Endothelial cell of umbilical vein (primary cell): ENCODE measurements at regions of chr3 and their contacts with region 1.

Region 1: DNA sequence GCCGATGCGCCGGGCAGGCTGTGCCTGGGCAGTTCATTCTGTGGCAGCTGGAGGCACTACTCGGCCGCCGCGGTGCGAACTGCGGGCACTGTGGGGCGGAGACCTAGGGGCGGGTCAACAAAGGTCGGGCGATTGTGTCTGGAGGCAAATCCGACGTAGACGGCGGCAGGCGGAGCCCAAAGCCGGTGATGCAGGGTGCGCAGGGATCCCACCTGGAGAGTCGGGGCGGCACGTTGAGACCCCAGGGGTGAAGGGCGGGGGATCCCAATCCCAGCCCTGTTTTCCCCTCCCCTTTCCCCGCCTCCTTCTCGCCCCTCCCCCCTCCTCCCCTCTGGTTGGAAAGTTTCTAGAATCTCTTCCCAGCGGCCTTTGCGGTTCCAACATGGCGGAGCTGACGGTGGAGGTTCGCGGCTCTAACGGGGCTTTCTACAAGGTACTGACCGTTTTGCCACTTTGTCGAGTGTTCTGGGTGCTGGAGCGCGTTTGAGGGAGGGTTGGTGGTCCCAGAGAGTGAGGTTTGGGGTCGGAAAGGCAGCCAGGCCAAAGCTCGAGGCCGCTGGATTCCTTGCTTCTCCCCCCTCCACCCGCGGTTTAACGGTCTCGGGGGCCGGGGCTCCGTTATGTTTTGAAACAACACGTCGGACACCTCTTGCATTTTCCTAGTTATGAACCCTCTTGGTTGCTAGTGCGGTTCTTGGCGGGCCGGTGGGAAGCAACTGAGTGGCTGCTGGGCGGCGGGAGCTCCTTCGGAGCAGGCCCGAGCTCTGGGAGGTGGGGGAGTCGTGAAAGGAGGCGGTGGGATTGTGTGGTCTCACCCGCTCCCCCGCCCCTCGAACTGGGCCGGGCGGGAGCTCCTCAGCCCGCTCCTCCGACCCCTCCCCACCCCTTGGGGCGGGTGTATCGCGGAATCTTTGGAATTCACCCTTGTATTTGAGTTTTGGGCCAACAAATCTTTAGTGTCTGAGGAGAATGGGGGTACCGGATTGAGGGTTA is at the start of gene FXR1:
- DNase-seq: peak; percentile 83
- H3K4me3 ChIP-seq: peak within 1 kb of the TSS; percentile 81 to 98 (median 90)
- H3K27ac ChIP-seq: peak within 1 kb of the TSS; percentile 92
- H3K4me1 ChIP-seq: peaks cover 16% of the 10 kb centered on the region
- H3K27me3 ChIP-seq: no peaks in the 10 kb centered on the region
- CTCF ChIP-seq: peak; percentile 67 to 83
- POLR2A ChIP-seq: peak; percentile 87
- total RNA-seq, gene FXR1: 183 and 186 TPM in 2 replicates

Region 2: DNA sequence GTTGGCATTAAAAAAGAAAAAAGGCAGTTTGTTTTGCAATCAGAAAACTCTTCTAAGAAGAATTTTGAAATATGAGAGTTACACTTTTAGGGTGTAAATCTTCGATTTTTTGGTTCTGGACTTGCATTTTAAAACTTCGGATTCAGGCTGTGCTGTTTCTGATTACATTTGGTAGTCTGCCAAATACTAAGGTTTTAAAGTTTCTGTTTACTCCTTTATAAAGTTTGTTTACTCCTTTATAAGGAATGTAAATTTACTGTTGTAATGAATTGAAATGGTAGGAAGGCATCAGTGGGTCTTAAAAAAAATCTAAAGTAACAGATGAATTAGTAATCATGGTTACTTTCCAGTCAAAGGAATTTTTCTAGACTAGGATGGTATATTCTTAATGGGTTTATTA is 13.9 kb after region 1 on chr3:
- CTCF ChIA-PET with region 1: interaction called, 4 read pairs
- POLR2A ChIA-PET with region 1: interaction called, 11 read pairs
- dilution Hi-C with region 1: no loop called
- intact Hi-C with region 1: no loop called
- DNase-seq: no peak
- H3K4me3 ChIP-seq: no peak overlapping the region
- H3K27ac ChIP-seq: no peak overlapping the region
- H3K4me1 ChIP-seq: no peaks in the 10 kb centered on the region
- H3K27me3 ChIP-seq: no peaks in the 10 kb centered on the region
- CTCF ChIP-seq: no peak
- POLR2A ChIP-seq: no peak

Region 3: GRCh38 chr3:180989291-180990163 is 76.9 kb after region 1 on chr3 and contains the start of gene DNAJC19:
- CTCF ChIA-PET with region 1: no interaction called
- POLR2A ChIA-PET with region 1: no interaction called
- dilution Hi-C with region 1: no loop called
- intact Hi-C with region 1: loop called (anchors 5 kb)
- DNase-seq: peak; percentile 96
- H3K4me3 ChIP-seq: peak within 1 kb of the TSS; percentile 2 to 78 (median 52)
- H3K27ac ChIP-seq: peak within 1 kb of the TSS; percentile 5
- H3K4me1 ChIP-seq: peaks cover 6% of the 10 kb centered on the region
- H3K27me3 ChIP-seq: peaks cover 2 to 5% of the 10 kb centered on the region in 2 experiments
- CTCF ChIP-seq: no peak
- POLR2A ChIP-seq: peak; percentile 93
- total RNA-seq, gene DNAJC19: 43.4 and 50.6 TPM in 2 replicates

Region 4: DNA sequence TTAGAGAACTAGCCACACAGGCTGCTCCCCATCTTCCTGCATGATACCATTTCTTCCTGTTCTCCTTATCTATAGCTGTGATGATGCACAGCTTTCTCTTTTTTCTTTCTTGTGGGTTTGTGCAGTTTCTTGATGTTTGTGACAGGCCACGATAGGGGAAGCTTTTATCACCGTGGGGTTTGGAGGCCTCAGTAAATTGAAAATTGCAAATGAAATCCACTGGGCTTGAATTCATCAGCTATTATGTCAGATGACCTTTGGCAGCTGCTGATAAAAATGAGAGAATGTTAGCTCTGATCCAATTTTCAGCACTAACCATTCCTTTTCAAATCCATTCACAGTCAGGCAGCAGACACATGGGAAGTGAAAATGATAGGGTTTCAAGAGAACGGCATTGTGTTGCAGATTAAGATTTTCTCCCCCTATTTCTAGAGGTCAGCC is 622.2 kb after region 1 on chr3:
- CTCF ChIA-PET with region 1: no interaction called
- POLR2A ChIA-PET with region 1: interaction called, 13 read pairs
- dilution Hi-C with region 1: no loop called
- intact Hi-C with region 1: no loop called
- DNase-seq: no peak
- H3K4me3 ChIP-seq: no peak overlapping the region
- H3K27ac ChIP-seq: no peak overlapping the region
- H3K4me1 ChIP-seq: no peaks in the 10 kb centered on the region
- H3K27me3 ChIP-seq: no peaks in the 10 kb centered on the region
- CTCF ChIP-seq: no peak
- POLR2A ChIP-seq: no peak